Astrocyte of the cerebellum (primary cell): ENCODE measurements at regions of chr2 and their contacts with region 1.

Region 1: DNA sequence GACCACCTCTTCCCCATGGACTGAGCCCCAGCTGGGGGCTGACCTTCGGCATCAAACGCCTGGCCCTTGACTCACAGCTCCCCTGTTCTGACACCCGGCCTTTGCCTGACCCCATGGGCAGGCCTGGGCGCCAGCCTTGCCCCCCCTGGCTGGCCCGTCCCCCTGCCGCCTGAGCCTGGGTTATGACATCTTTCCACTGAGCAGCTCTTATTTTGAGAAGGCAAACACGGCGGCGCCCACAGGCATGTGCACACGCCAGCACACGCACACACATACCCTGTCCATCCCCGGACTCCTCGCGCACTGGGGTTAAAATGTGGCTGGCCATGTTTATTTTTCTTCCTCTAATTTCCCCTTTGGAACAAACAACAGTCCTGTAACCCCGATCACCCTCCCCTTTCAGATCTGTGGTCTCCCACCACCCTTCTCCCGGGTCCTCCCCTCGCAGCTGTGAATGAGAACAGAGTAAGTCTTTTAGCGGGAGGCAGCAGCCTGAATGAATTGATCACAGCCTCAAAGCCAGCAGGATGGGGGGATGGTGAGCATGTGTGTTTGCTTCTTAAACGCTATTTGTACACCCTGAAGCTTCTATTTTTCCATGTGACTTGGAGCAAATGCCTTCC is 11.8 kb upstream of the ATOH8 start:
- DNase-seq: peak; percentile 86
- H3K4me3 ChIP-seq: peak overlapping the region; percentile 2
- CTCF ChIP-seq: no peak

Region 2: GRCh38 chr2:85804583-85804982 is 62.6 kb after region 1 on chr2:
- in situ Hi-C with region 1: loop called (anchors 5 kb)
- DNase-seq: no peak
- H3K4me3 ChIP-seq: no peak overlapping the region
- CTCF ChIP-seq: peak; percentile 66